ENCODE measurements at regions of chr12 and their contacts with region 1.

Region 1: GRCh38 chr12:79344855-79345847 is 345.6 kb downstream of the PAWR start:
- DNase-seq: peak; percentile 37
- H3K4me3 ChIP-seq: no peak overlapping the region
- H3K27ac ChIP-seq: no peak overlapping the region
- H3K4me1 ChIP-seq: no peaks in the 10 kb centered on the region
- H3K27me3 ChIP-seq: no peaks in the 10 kb centered on the region
- CTCF ChIP-seq: peak; percentile 82 to 85

Region 2: GRCh38 chr12:78392918-78393317 is 952.2 kb before region 1 on chr12:
- CTCF ChIA-PET with region 1: no interaction called
- dilution Hi-C with region 1: no loop called
- in situ Hi-C with region 1: no loop called
- intact Hi-C with region 1: loop called (anchors 10 kb)
- DNase-seq: peak; percentile 2
- H3K4me3 ChIP-seq: no peak overlapping the region
- H3K27ac ChIP-seq: no peak overlapping the region
- H3K4me1 ChIP-seq: no peaks in the 10 kb centered on the region
- H3K27me3 ChIP-seq: peaks cover 10% of the 10 kb centered on the region
- CTCF ChIP-seq: peak; percentile 2 to 27

Region 3: GRCh38 chr12:78470354-78471195 is 874.6 kb before region 1 on chr12:
- CTCF ChIA-PET with region 1: interaction called, 4 read pairs
- dilution Hi-C with region 1: no loop called
- in situ Hi-C with region 1: no loop called
- intact Hi-C with region 1: loop called (anchors 1 kb)
- DNase-seq: peak; percentile 32
- H3K4me3 ChIP-seq: no peak overlapping the region
- H3K27ac ChIP-seq: no peak overlapping the region
- H3K4me1 ChIP-seq: no peaks in the 10 kb centered on the region
- H3K27me3 ChIP-seq: no peaks in the 10 kb centered on the region
- CTCF ChIP-seq: peak; percentile 58 to 65

Region 4: DNA sequence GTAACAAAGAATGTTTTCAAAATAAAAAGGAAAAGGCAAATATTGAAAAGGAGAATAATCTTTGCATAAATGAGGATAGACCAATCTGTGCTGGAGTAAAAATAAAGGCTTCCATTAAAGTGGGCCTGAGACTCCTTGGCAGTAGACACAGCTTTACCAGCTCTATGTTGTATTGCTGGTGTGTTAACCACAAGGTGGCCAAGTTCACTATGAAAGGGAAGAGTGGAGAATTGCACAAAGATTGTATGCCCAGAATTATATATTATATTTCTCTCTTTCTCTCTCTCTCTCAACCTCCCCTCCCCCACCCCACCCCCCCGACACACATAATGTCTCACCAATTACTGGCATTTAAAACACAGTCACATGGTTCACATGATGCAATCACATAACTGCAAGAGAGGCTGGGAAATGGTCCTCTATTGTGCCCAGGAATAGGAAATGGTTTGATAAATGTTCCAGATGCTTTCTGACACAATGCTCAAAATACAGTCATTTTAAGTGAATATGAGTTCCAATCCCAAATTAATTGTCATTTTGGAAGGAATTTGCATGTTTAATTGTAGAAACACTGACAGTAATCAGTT is 703.2 kb before region 1 on chr12:
- CTCF ChIA-PET with region 1: no interaction called
- dilution Hi-C with region 1: no loop called
- in situ Hi-C with region 1: no loop called
- intact Hi-C with region 1: loop called (anchors 10 kb)
- DNase-seq: peak; percentile 4
- H3K4me3 ChIP-seq: no peak overlapping the region
- H3K27ac ChIP-seq: no peak overlapping the region
- H3K4me1 ChIP-seq: no peaks in the 10 kb centered on the region
- H3K27me3 ChIP-seq: no peaks in the 10 kb centered on the region
- CTCF ChIP-seq: peak; percentile 19 to 42

Region 5: DNA sequence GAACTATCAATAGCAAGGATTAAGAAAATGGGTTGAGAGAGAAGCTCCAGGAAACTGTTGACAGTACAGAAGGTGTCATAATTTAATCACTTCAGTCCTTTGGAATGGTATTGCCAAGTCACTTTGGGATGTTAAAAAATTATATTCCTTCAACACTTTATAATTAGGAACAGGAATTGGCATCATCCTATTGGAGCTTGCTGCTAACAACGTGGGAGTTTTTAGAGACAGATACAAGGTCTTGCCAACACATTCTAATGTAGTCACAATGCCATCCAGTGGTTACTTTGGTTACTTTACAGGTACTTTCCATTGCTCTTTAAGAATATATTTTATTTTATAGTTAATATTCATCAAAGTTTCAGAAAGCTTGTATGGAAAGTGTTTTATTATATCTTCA is 170.5 kb before region 1 on chr12:
- CTCF ChIA-PET with region 1: no interaction called
- dilution Hi-C with region 1: no loop called
- in situ Hi-C with region 1: no loop called
- intact Hi-C with region 1: loop called (anchors 1 kb)
- DNase-seq: peak; percentile 36
- H3K4me3 ChIP-seq: no peak overlapping the region
- H3K27ac ChIP-seq: no peak overlapping the region
- H3K4me1 ChIP-seq: no peaks in the 10 kb centered on the region
- H3K27me3 ChIP-seq: no peaks in the 10 kb centered on the region
- CTCF ChIP-seq: peak; percentile 12 to 50

Measured in mammary epithelial cell (primary cell).